ENCODE measurements at regions of chr5 and their contacts with region 1.

Region 1: GRCh38 chr5:147188200-147189108 is 46.4 kb upstream of the STK32A start:
- DNase-seq: peak; percentile 78
- H3K4me3 Mint-ChIP-seq: no peak overlapping the region
- H3K27ac Mint-ChIP-seq: no peak overlapping the region
- H3K4me1 Mint-ChIP-seq: peaks cover 16% of the 10 kb centered on the region
- H3K27me3 Mint-ChIP-seq: no peaks in the 10 kb centered on the region
- CTCF ChIP-seq: peak; percentile 79

Region 2: GRCh38 chr5:146533260-146533857 is 655.1 kb before region 1 on chr5:
- CTCF ChIA-PET with region 1: interaction called, 19 read pairs
- intact Hi-C with region 1: loop called (anchors 1 kb)
- DNase-seq: peak; percentile 84
- H3K4me3 Mint-ChIP-seq: no peak overlapping the region
- H3K27ac Mint-ChIP-seq: no peak overlapping the region
- H3K4me1 Mint-ChIP-seq: peaks cover 9% of the 10 kb centered on the region
- H3K27me3 Mint-ChIP-seq: peaks cover 6% of the 10 kb centered on the region
- CTCF ChIP-seq: peak; percentile 75

Region 3: GRCh38 chr5:146548781-146549449 is 639.5 kb before region 1 on chr5:
- CTCF ChIA-PET with region 1: interaction called, 16 read pairs
- intact Hi-C with region 1: no loop called
- DNase-seq: no peak
- H3K4me3 Mint-ChIP-seq: no peak overlapping the region
- H3K27ac Mint-ChIP-seq: no peak overlapping the region
- H3K4me1 Mint-ChIP-seq: no peaks in the 10 kb centered on the region
- H3K27me3 Mint-ChIP-seq: no peaks in the 10 kb centered on the region
- CTCF ChIP-seq: no peak

Region 4: GRCh38 chr5:147098233-147098790 is 90.1 kb before region 1 on chr5:
- CTCF ChIA-PET with region 1: interaction called, 93 read pairs
- intact Hi-C with region 1: loop called (anchors 1 kb)
- DNase-seq: peak; percentile 67
- H3K4me3 Mint-ChIP-seq: no peak overlapping the region
- H3K27ac Mint-ChIP-seq: no peak overlapping the region
- H3K4me1 Mint-ChIP-seq: no peaks in the 10 kb centered on the region
- H3K27me3 Mint-ChIP-seq: no peaks in the 10 kb centered on the region
- CTCF ChIP-seq: peak; percentile 71

Region 5: DNA sequence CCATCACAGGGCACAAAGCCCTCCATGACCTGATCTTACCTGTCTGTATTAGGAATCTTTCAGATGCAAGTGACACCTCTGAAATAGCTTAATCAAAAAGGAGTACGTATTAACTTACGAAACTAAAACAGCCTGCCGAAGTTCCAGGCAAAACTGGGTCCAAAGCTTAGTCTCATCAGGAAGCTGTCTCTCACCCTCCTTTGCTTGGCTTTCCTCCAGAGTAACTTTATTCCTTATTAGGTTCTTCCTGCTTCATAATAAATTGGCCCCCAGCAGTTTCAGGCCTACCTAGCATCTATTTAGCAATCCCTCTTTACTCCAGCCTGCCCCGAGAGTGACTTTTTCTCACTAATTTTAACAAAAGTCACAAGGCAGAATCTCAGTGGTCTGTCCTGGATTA is 12.0 kb before region 1 on chr5:
- CTCF ChIA-PET with region 1: interaction called, 11 read pairs
- intact Hi-C with region 1: no loop called
- DNase-seq: no peak
- H3K4me3 Mint-ChIP-seq: no peak overlapping the region
- H3K27ac Mint-ChIP-seq: no peak overlapping the region
- H3K4me1 Mint-ChIP-seq: peaks cover 35% of the 10 kb centered on the region
- H3K27me3 Mint-ChIP-seq: no peaks in the 10 kb centered on the region
- CTCF ChIP-seq: no peak

Measured in Calu3 (cell line).